Activated naive CD4-positive, alpha-beta T cell treated with anti-CD3 and anti-CD28 coated beads for 36 hours (primary cell): ENCODE measurements at regions of chr6 and their contacts with region 1.

Region 1: DNA sequence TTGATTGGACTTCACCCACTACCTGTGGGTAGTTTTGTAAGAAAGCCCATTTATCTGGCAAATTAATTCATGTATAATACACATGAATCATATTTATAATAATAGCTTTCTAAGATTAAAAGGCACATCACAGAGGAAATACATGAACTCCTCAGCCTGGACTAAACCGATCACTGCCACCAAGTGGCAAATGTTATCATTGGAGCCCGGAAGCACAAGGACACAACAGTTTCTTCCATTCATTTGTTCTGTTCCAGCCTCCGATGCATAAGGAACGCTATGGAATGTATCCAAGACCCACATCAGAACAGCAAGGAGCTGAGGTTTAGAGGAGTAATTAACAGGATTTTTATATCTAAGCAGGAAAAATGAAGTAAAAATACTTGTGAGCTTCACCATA is 13.9 kb upstream of the IPCEF1 start:
- DNase-seq: peak; percentile 47
- H3K4me3 Mint-ChIP-seq: no peak overlapping the region
- H3K27ac Mint-ChIP-seq: no peak overlapping the region
- H3K4me1 Mint-ChIP-seq: peaks cover 27% of the 10 kb centered on the region
- H3K27me3 Mint-ChIP-seq: peaks cover 7% of the 10 kb centered on the region

Region 2: DNA sequence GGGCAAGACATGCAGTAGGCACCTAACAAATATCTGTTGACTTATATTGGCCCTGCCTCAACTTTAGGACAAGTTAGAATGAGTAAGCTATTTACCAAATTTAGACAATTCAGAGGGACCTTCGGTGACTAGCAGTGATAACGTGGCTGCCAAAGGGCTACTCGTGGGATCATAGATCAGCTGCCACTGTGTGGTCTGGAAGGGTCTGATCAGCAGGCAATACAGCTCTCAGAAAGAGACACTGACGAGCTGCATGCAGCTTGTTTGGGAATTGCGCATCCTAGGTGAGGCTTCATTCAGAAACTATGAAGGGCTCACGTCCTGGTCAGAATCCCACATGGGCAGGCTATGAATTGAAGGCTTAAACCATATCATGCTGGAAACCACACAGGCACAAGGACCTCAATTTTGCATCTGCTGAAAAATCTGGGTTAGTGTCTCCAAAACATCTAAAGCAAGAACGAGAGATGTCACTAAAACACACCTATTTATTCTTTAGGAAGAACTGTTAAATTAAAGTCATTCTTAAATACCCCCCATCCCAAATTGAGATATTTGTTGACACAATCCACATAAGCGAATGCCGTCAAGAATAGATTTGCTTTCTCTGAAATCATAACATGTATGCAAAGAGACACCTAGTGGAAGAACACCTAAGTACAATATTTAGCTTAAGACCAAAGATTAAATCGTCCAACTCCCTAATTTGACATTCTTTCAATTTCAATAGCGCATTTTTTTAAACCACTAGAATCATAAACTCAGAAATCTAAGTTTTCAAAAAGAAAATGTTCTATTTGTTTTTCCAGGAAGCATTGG is 93.5 kb before region 1 on chr6:
- CTCF ChIA-PET with region 1: interaction called, 11 read pairs
- intact Hi-C with region 1: loop called (anchors 1 kb)
- DNase-seq: no peak
- H3K4me3 Mint-ChIP-seq: peak overlapping the region; percentile 65
- H3K27ac Mint-ChIP-seq: no peak overlapping the region
- H3K4me1 Mint-ChIP-seq: peaks cover 34% of the 10 kb centered on the region
- H3K27me3 Mint-ChIP-seq: no peaks in the 10 kb centered on the region

Region 3: DNA sequence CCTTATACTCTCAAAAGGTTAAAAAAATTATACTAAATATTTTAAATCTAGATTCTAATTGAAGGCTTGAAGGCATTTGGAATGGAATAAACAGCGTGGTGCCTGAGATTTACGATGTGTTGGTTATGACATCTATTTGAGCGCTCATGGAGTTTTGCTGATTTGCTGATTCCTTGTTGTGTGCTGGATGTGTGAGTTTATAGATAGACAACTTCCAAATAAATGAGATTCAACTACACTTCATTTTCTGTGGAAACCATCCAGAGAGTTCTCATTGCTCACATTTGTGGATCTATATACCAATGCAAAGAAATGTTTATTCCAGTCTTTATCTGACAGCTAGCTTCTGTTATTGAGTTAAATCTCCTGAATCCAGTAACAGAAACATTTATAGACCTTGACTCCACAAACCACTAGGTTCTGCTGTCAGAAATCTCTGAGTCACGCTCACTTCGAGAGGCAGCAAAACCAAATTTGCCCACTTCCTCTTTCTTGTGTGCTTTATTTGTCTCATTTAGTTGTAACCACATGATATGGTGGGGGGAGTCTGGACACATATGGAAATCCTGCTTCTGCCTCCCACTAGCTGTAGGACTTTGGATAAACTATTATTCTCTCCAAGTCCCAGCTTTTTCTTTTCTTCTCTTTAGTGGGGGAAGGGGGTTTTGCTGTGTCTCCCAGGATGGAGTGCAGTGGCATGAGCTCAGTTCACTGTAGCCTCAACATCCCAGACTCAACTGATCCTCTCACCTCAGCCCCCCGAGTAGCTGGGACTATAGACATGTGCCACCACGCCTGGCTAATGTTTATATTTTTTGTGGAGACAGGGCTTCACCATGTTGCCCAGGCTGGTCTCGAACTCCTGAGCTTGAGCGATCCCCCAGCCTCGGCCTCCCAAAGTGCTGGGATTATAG is 68.4 kb before region 1 on chr6:
- CTCF ChIA-PET with region 1: interaction called, 7 read pairs
- intact Hi-C with region 1: loop called (anchors 2 kb)
- DNase-seq: peak; percentile 56
- H3K4me3 Mint-ChIP-seq: no peak overlapping the region
- H3K27ac Mint-ChIP-seq: no peak overlapping the region
- H3K4me1 Mint-ChIP-seq: peaks cover 8% of the 10 kb centered on the region
- H3K27me3 Mint-ChIP-seq: peaks cover 3% of the 10 kb centered on the region

Region 4: DNA sequence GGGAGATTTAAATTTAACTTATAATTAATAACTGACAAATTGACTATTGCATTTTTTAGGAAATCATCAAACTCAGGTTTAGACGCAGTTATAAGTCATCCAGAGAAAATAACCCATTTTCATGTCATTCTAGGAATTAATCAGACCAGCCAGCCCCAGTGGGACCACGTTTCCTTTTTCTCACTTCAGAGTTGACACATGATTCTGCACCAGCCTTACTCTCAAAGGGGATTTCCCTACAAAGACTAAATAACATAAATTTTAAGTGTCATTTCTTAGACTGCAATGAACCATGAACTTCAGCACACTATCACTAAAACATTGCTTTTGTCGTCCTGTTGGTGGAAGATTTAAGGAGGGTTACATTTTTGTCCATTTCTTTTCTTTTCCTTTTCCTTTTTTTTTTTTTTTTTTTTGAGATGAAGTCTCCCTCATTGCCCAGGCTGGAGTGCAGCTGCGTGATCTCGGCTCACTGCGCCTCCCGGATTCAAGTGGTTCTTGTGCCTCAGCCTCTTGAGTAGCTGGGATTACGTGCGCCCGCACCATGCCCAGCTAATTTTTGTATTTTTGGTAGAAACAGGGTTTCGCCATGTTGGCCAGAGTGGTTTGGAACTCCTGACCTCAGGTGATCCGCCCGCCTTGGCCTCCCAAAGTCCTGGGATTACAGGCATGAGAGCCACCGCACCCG is 17.5 kb before region 1 on chr6:
- CTCF ChIA-PET with region 1: interaction called, 4 read pairs
- intact Hi-C with region 1: loop called (anchors 1 kb)
- DNase-seq: peak; percentile 83
- H3K4me3 Mint-ChIP-seq: no peak overlapping the region
- H3K27ac Mint-ChIP-seq: no peak overlapping the region
- H3K4me1 Mint-ChIP-seq: peaks cover 38% of the 10 kb centered on the region
- H3K27me3 Mint-ChIP-seq: peaks cover 25% of the 10 kb centered on the region

Region 5: GRCh38 chr6:154653853-154654252 is 283.3 kb after region 1 on chr6:
- CTCF ChIA-PET with region 1: no interaction called
- intact Hi-C with region 1: no loop called
- DNase-seq: no peak
- H3K4me3 Mint-ChIP-seq: no peak overlapping the region
- H3K27ac Mint-ChIP-seq: no peak overlapping the region
- H3K4me1 Mint-ChIP-seq: no peaks in the 10 kb centered on the region
- H3K27me3 Mint-ChIP-seq: no peaks in the 10 kb centered on the region